IMR-90 (cell line): ENCODE measurements at regions of chr1 and their contacts with region 1.

Region 1: GRCh38 chr1:149962123-149962548 is 25.5 kb upstream of the MTMR11 start:
- DNase-seq: peak; percentile 82
- ATAC-seq: peak; percentile 89
- H3K4me3 ChIP-seq: no peak overlapping the region
- H3K27ac ChIP-seq: no peak overlapping the region
- H3K4me1 ChIP-seq: peaks cover 4% of the 10 kb centered on the region
- H3K27me3 ChIP-seq: no peaks in the 10 kb centered on the region
- CTCF ChIP-seq: peak; percentile 80
- POLR2A ChIP-seq: 0 out of 2 replicates have a peak, but pooled peaks have one; percentile 25
- RAD21 ChIP-seq: peak; percentile 90

Region 2: DNA sequence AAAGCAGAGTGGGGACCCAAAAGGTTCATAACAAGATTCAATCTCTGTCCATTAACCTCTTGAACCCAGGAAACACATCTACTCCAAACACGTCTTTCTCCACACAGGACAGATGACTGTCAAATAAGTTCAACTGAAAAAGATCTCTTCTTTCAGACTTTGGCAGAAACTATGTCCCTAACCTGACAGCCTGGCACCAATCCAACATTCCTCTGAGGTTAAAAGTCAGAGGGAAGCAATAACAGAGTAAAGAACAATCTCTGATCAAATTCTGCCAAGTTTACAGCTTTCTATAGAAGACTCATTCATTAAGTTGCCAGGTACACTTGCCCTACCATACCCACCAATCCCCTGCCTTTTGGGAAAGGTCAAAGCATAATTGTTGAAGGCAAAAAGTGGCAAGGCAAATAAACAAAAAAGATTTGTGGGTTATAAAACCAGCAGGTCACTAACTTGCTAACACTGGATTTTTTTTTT is 16.4 kb after region 1 on chr1:
- CTCF ChIA-PET with region 1: no interaction called
- POLR2A ChIA-PET with region 1: no interaction called
- dilution Hi-C with region 1: no loop called
- in situ Hi-C with region 1: no loop called
- intact Hi-C with region 1: no loop called
- DNase-seq: no peak
- ATAC-seq: no peak
- H3K4me3 ChIP-seq: no peak overlapping the region
- H3K27ac ChIP-seq: no peak overlapping the region
- H3K4me1 ChIP-seq: peaks cover 2% of the 10 kb centered on the region; the same call in 1 of the 2 replicates
- H3K27me3 ChIP-seq: no peaks in the 10 kb centered on the region
- CTCF ChIP-seq: no peak
- POLR2A ChIP-seq: no peak
- RAD21 ChIP-seq: no peak

Region 3: GRCh38 chr1:150010393-150011115 is 48.4 kb after region 1 on chr1 and contains the start of gene OTUD7B:
- CTCF ChIA-PET with region 1: interaction called, 4 read pairs
- POLR2A ChIA-PET with region 1: no interaction called
- dilution Hi-C with region 1: no loop called
- in situ Hi-C with region 1: no loop called
- intact Hi-C with region 1: loop called (anchors 2 kb)
- DNase-seq: peak; percentile 84
- ATAC-seq: peak; percentile 91
- H3K4me3 ChIP-seq: peak within 1 kb of the TSS; percentile 92
- H3K27ac ChIP-seq: peak within 1 kb of the TSS; percentile 97
- H3K4me1 ChIP-seq: peaks cover 7% of the 10 kb centered on the region; the same call in 1 of the 2 replicates
- H3K27me3 ChIP-seq: no peaks in the 10 kb centered on the region
- CTCF ChIP-seq: no peak
- POLR2A ChIP-seq: peak; percentile 41; the same call in 1 of the 2 replicates
- RAD21 ChIP-seq: no peak
- total RNA-seq, gene OTUD7B: 18.1 and 18.6 TPM in 2 replicates

Region 4: DNA sequence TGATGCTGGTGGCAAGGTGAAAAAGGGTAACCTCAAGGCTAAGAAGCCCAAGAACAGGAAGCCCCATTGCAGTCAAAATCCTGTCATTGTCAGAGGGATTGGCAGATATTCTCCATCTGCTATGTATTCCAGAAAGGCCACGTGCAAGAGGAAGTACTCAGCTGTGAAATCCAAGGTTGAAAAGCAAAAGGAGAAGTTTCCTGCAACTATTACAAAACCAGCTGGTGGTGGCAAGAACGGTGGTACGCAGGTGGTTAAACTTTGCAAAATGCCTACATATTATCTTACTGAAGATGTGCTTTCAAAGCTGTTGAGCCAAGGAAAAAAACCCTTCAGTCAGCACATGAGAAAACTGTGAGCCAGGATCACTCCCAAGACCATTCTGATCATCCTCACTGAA is 91.8 kb after region 1 on chr1:
- CTCF ChIA-PET with region 1: interaction called, 6 read pairs
- POLR2A ChIA-PET with region 1: no interaction called
- dilution Hi-C with region 1: no loop called
- in situ Hi-C with region 1: loop called (anchors 5 kb)
- intact Hi-C with region 1: loop called (anchors 1 kb)
- DNase-seq: no peak
- ATAC-seq: no peak
- H3K4me3 ChIP-seq: no peak overlapping the region
- H3K27ac ChIP-seq: no peak overlapping the region
- H3K4me1 ChIP-seq: no peaks in the 10 kb centered on the region; the same call in 1 of the 2 replicates
- H3K27me3 ChIP-seq: no peaks in the 10 kb centered on the region
- CTCF ChIP-seq: no peak
- POLR2A ChIP-seq: no peak
- RAD21 ChIP-seq: no peak

Region 5: GRCh38 chr1:150067184-150068036 is 105.3 kb after region 1 on chr1 and contains the start of gene VPS45:
- CTCF ChIA-PET with region 1: interaction called, 5 read pairs
- POLR2A ChIA-PET with region 1: no interaction called
- dilution Hi-C with region 1: no loop called
- in situ Hi-C with region 1: no loop called
- intact Hi-C with region 1: loop called (anchors 5 kb)
- DNase-seq: peak; percentile 88
- ATAC-seq: peak; percentile 96
- H3K4me3 ChIP-seq: peak within 1 kb of the TSS; percentile 63
- H3K27ac ChIP-seq: peak within 1 kb of the TSS; percentile 89
- H3K4me1 ChIP-seq: peaks cover 2% of the 10 kb centered on the region; the same call in 1 of the 2 replicates
- H3K27me3 ChIP-seq: no peaks in the 10 kb centered on the region
- CTCF ChIP-seq: no peak
- POLR2A ChIP-seq: peak; percentile 62; the same call in 1 of the 2 replicates
- RAD21 ChIP-seq: no peak; the same call in 1 of the 2 replicates
- total RNA-seq, gene VPS45: 32.4 and 41.1 TPM in 2 replicates

Region 6: GRCh38 chr1:150168960-150169601 is 206.9 kb after region 1 on chr1:
- CTCF ChIA-PET with region 1: interaction called, 4 read pairs
- POLR2A ChIA-PET with region 1: no interaction called
- dilution Hi-C with region 1: no loop called
- in situ Hi-C with region 1: loop called (anchors 5 kb)
- intact Hi-C with region 1: loop called (anchors 2 kb)
- DNase-seq: peak; percentile 63
- ATAC-seq: peak; percentile 65
- H3K4me3 ChIP-seq: no peak overlapping the region
- H3K27ac ChIP-seq: no peak overlapping the region
- H3K4me1 ChIP-seq: peaks cover 6% of the 10 kb centered on the region
- H3K27me3 ChIP-seq: no peaks in the 10 kb centered on the region
- CTCF ChIP-seq: peak; percentile 93
- POLR2A ChIP-seq: no peak
- RAD21 ChIP-seq: peak; percentile 93

Region 7: GRCh38 chr1:150186789-150187559 is 224.8 kb after region 1 on chr1:
- CTCF ChIA-PET with region 1: interaction called, 4 read pairs
- POLR2A ChIA-PET with region 1: no interaction called
- dilution Hi-C with region 1: no loop called
- in situ Hi-C with region 1: no loop called
- intact Hi-C with region 1: loop called (anchors 1 kb)
- DNase-seq: peak; percentile 56
- ATAC-seq: peak; percentile 61
- H3K4me3 ChIP-seq: no peak overlapping the region
- H3K27ac ChIP-seq: peak overlapping the region; percentile 75
- H3K4me1 ChIP-seq: peaks cover 2% of the 10 kb centered on the region; the same call in 1 of the 2 replicates
- H3K27me3 ChIP-seq: no peaks in the 10 kb centered on the region
- CTCF ChIP-seq: peak; percentile 60
- POLR2A ChIP-seq: no peak
- RAD21 ChIP-seq: peak; percentile 75